ENCODE measurements at regions of chr19 and their contacts with region 1.

Region 1: DNA sequence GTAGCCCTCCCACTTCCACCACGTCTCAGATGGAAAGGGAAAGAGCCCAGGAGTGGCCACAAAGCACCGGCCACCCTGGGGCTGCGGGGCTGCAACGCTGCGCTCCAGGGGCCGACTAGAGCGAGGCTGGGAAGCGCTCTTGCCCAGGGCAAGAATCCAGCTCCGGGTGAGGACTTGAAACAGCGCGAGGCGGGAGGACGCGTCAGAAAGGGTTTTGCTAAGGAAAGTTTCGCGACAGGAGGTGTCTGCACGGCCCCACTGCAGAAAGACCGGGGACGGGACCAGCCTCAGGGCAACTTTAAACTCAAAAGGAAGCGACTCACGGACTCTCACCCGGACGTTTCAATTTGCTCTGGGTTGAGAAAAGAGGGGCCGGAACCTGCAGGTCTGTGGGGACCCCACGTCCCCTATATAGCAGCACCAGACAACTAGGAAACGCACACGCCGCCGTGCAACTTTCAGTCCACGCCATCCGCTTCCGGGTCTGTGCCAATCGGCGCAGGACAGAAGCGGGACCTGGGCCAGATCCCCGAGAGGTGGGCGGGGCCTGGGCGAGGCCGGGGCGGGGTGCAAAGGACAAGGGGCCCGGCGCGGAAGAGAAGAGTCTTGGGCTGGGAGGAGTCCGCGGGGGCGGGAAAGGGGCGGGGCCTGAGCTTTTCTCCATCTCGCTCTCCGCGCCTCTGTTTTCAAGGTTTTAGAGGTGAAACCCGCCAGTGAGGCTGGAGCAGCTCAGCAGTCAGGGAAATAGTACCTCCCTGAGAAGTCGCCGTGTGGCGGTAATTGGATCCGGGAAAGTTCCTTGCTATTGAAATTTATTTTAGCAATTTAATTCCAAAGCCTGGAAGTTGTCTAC is at the start of gene ZNF816:
- DNase-seq: peak; percentile 82 to 99
- H3K4me3 ChIP-seq: peak within 1 kb of the TSS; percentile 82 to 89 (median 88)
- H3K27ac ChIP-seq: peak within 1 kb of the TSS; percentile 48; the same call in 1 of the 2 replicates
- H3K4me1 ChIP-seq: peaks cover 0 to 7% (median under 1%) of the 10 kb centered on the region in 4 experiments; a peak in 2 of 7 replicates
- H3K27me3 ChIP-seq: no peaks in the 10 kb centered on the region
- CTCF ChIP-seq: no peak
- EP300 ChIP-seq: no peak
- POLR2A ChIP-seq: peak; percentile 42 to 63; a peak in 2 of 3 replicates
- RAD21 ChIP-seq: no peak
- total RNA-seq, gene ZNF816: 12.2 and 13.2 TPM in 2 replicates

Region 2: DNA sequence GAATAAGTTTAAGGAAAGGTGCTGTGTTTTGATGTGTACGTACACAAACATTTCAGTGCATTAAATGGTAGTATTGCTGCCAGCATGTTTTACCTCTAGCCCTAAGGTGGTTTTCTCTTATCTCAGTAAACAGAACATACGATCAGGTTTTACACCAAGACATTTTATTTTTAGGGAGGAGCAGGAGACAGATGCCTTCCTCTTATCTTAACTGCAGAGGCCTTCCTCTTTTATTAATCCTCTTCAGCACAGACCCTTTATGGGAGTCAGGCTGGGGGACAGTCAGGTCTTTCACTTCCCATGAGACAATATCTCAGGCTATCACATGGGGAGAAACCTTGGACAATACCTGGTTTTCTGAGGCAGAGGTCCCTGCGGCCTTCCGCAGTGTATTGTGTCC is 212.8 kb before region 1 on chr19:
- CTCF ChIA-PET with region 1: no interaction called
- POLR2A ChIA-PET with region 1: no interaction called
- DNase-seq: no peak
- H3K4me3 ChIP-seq: no peak overlapping the region
- H3K27ac ChIP-seq: no peak overlapping the region
- H3K4me1 ChIP-seq: no peaks in the 10 kb centered on the region
- H3K27me3 ChIP-seq: no peaks in the 10 kb centered on the region
- CTCF ChIP-seq: no peak
- EP300 ChIP-seq: no peak
- POLR2A ChIP-seq: no peak
- RAD21 ChIP-seq: no peak

Region 3: GRCh38 chr19:52946320-52947275 is 16.0 kb before region 1 on chr19:
- CTCF ChIA-PET with region 1: interaction called, 5 read pairs
- POLR2A ChIA-PET with region 1: interaction called, 16 read pairs
- DNase-seq: peak; percentile 89 to 96
- H3K4me3 ChIP-seq: peak overlapping the region; percentile 25 to 57 (median 36); a peak in 5 of 8 replicates
- H3K27ac ChIP-seq: no peak overlapping the region
- H3K4me1 ChIP-seq: peaks cover 2 to 15% (median 11%) of the 10 kb centered on the region in 4 experiments; a peak in 5 of 7 replicates
- H3K27me3 ChIP-seq: no peaks in the 10 kb centered on the region
- CTCF ChIP-seq: no peak
- EP300 ChIP-seq: no peak
- POLR2A ChIP-seq: no peak
- RAD21 ChIP-seq: peak in 1 of 2 experiments; percentile 19; a peak in 1 of 4 replicates

Region 4: DNA sequence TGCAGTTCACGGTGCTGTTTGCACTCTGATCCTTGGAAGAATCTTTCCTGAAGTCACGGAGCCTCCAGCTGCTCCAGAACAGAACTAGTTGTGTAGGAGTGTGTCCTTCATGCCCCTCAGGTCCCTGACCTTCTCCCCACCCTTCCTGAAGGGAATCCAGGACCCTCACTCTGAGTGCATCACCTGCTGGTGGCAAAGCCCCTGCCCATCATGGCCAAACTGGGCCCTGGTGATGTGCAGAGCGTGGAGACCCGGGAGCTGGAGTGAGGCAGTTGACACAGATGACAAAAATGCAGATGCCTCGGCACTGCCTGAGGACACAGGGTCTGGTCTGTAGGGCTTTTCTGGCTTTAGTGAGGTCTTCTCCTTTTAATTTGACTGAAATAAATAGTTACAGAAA is 16.0 kb after region 1 on chr19:
- CTCF ChIA-PET with region 1: no interaction called
- POLR2A ChIA-PET with region 1: interaction called, 10 read pairs
- DNase-seq: no peak
- H3K4me3 ChIP-seq: no peak overlapping the region
- H3K27ac ChIP-seq: no peak overlapping the region
- H3K4me1 ChIP-seq: no peaks in the 10 kb centered on the region
- H3K27me3 ChIP-seq: no peaks in the 10 kb centered on the region
- CTCF ChIP-seq: no peak
- EP300 ChIP-seq: no peak
- POLR2A ChIP-seq: no peak
- RAD21 ChIP-seq: no peak